Endothelial cell of umbilical vein (primary cell): ENCODE measurements at regions of chr4 and their contacts with region 1.

Region 1: DNA sequence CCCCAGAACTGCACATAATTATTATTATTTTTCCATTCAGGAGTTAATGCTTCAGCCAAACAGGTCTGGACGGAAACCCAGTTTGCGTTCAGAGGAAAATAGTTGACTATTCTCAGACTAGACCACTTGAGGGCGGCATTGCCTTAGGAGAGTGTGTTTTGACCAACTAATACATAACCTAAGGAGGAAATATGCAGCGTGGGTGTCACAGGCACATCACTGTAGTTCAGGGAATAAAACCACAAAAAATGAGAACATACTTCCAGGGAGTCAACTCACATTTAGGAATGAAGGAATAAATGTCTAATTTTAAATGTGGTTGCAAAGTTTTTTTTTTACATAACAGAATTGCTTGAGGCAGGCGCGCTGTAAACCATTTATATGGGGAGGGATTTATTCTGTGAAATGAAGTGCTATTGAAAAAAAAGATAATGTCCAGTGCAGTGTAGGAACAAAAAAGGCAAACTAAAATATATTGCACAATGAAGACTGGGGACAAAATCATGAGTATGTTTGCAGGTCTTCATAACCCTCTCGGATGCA is 93.3 kb downstream of the SYNPO2 start:
- DNase-seq: peak; percentile 64
- H3K4me3 ChIP-seq: no peak overlapping the region
- H3K27ac ChIP-seq: no peak overlapping the region
- H3K4me1 ChIP-seq: peaks cover 7% of the 10 kb centered on the region
- H3K27me3 ChIP-seq: no peaks in the 10 kb centered on the region
- CTCF ChIP-seq: peak; percentile 56 to 57
- POLR2A ChIP-seq: no peak

Region 2: DNA sequence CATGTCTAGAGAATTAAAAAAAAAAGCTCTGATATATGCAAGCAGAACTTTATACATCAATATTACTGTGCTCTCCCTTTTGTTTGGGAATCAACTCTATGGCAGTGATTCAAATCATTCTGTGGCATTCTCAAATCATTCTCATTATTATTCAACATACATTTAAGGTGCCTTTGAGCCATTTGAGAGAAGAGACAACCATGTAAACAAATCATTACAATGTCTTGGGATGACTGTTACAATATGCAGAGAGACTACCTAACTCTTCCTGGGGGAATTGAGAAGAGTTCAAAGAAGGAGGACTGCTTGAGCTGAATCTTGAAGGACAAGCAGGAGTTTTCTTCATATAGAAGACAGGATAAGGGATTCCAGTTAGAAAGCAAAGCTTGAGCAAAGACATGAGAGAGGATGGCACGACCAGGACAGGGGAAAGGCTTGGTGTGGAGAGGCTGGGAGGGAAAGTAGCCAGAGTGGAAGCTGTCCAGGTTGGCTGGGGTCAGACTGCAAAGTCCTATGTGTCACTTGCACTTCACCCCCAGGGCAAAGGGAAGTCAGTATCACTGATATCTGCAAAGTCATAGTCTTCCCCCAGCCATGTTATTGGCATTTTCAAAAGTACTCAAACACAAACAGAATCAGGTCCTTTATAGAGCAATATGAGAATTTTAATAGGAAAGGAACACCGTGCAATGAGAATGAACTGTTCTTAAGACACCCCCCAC is 155.0 kb before region 1 on chr4:
- CTCF ChIA-PET with region 1: no interaction called
- POLR2A ChIA-PET with region 1: no interaction called
- dilution Hi-C with region 1: no loop called
- intact Hi-C with region 1: no loop called
- DNase-seq: no peak
- H3K4me3 ChIP-seq: no peak overlapping the region
- H3K27ac ChIP-seq: no peak overlapping the region
- H3K4me1 ChIP-seq: peaks cover 8% of the 10 kb centered on the region
- H3K27me3 ChIP-seq: no peaks in the 10 kb centered on the region
- CTCF ChIP-seq: no peak
- POLR2A ChIP-seq: no peak

Region 3: DNA sequence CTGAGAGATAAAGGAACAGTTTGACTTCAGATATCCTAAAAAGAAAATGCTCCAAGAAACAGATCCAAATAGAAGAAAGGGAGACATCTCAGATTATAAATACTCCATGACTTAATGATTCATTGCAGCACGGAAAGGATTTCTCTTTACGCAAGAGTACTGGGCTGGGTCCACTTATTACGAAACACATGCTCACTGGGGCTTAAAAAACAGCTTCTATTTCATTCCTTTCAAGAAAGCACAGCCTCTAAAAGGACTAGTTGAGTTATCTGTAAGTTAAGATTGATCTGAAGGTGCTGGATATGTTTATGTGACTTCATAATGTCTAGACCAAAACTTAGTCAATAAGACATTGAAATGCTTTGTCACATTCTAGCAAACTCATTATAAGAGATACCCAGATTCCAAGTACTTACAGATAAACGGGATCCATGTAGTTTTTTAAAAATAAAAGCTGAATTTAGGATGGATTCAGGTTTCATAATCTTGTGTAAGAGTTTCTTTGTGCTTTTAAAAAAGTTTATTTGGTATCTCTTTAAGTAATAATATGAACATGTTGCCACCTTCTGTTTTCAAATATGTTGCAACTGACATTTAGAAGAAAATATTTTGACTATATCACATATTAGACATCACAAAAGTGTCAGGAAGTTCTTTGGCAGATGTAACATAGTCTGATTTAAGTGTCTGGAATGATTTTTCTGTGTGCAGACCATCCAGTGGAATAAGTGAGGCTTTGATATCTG is 44.2 kb after region 1 on chr4:
- CTCF ChIA-PET with region 1: no interaction called
- POLR2A ChIA-PET with region 1: no interaction called
- dilution Hi-C with region 1: no loop called
- intact Hi-C with region 1: no loop called
- DNase-seq: no peak
- H3K4me3 ChIP-seq: no peak overlapping the region
- H3K27ac ChIP-seq: no peak overlapping the region
- H3K4me1 ChIP-seq: peaks cover 5% of the 10 kb centered on the region
- H3K27me3 ChIP-seq: no peaks in the 10 kb centered on the region
- CTCF ChIP-seq: no peak
- POLR2A ChIP-seq: no peak

Region 4: GRCh38 chr4:119286377-119287002 is 304.6 kb after region 1 on chr4:
- CTCF ChIA-PET with region 1: interaction called, 8 read pairs
- POLR2A ChIA-PET with region 1: no interaction called
- dilution Hi-C with region 1: no loop called
- intact Hi-C with region 1: loop called (anchors 1 kb)
- DNase-seq: peak; percentile 83
- H3K4me3 ChIP-seq: no peak overlapping the region
- H3K27ac ChIP-seq: no peak overlapping the region
- H3K4me1 ChIP-seq: peaks cover 44% of the 10 kb centered on the region
- H3K27me3 ChIP-seq: no peaks in the 10 kb centered on the region
- CTCF ChIP-seq: peak; percentile 27 to 28
- POLR2A ChIP-seq: no peak

Region 5: GRCh38 chr4:119490335-119490734 is 508.4 kb after region 1 on chr4:
- CTCF ChIA-PET with region 1: interaction called, 32 read pairs
- POLR2A ChIA-PET with region 1: no interaction called
- dilution Hi-C with region 1: no loop called
- intact Hi-C with region 1: loop called (anchors 2 kb)
- DNase-seq: peak; percentile 72
- H3K4me3 ChIP-seq: no peak overlapping the region
- H3K27ac ChIP-seq: no peak overlapping the region
- H3K4me1 ChIP-seq: no peaks in the 10 kb centered on the region
- H3K27me3 ChIP-seq: no peaks in the 10 kb centered on the region
- CTCF ChIP-seq: peak; percentile 11 to 53
- POLR2A ChIP-seq: no peak

Region 6: DNA sequence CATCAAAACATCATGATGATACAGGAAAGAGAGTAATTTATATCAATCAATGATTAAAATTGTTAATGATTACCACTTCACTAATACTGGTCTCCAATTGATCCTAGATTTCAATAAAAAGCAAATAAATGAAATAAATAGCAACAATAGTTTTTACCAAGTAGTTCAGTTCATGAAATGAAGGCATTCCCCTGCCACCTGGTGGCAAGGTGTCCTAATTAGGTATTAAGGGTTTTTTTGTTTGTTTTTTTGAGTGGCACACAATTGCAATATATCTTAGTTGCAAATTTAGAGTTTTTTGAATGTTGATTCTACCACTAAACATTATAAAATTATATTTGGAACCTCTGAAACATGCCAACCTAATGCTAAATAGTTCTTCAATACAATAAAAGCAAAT is 804.1 kb after region 1 on chr4:
- CTCF ChIA-PET with region 1: no interaction called
- POLR2A ChIA-PET with region 1: no interaction called
- dilution Hi-C with region 1: no loop called
- intact Hi-C with region 1: loop called (anchors 5 kb)
- DNase-seq: peak; percentile 20
- H3K4me3 ChIP-seq: no peak overlapping the region
- H3K27ac ChIP-seq: no peak overlapping the region
- H3K4me1 ChIP-seq: no peaks in the 10 kb centered on the region
- H3K27me3 ChIP-seq: peaks cover 2 to 4% of the 10 kb centered on the region in 2 experiments
- CTCF ChIP-seq: no peak
- POLR2A ChIP-seq: no peak